PC-9 (cell line): ENCODE measurements at regions of chr7 and their contacts with region 1.

Region 1: GRCh38 chr7:155773531-155773930 is 38.7 kb downstream of the SHH start:
- DNase-seq: no peak
- H3K4me3 ChIP-seq: no peak overlapping the region
- H3K27ac ChIP-seq: no peak overlapping the region
- H3K4me1 ChIP-seq: no peaks in the 10 kb centered on the region
- H3K27me3 ChIP-seq: no peaks in the 10 kb centered on the region
- CTCF ChIP-seq: no peak

Region 2: GRCh38 chr7:155729834-155730233 is 43.7 kb before region 1 on chr7:
- CTCF ChIA-PET with region 1: no interaction called
- POLR2A ChIA-PET with region 1: no interaction called
- intact Hi-C with region 1: no loop called
- DNase-seq: no peak
- H3K4me3 ChIP-seq: no peak overlapping the region
- H3K27ac ChIP-seq: no peak overlapping the region
- H3K4me1 ChIP-seq: peaks cover 13% of the 10 kb centered on the region
- H3K27me3 ChIP-seq: no peaks in the 10 kb centered on the region
- CTCF ChIP-seq: no peak

Region 3: GRCh38 chr7:155762655-155763054 is 10.9 kb before region 1 on chr7:
- CTCF ChIA-PET with region 1: no interaction called
- POLR2A ChIA-PET with region 1: no interaction called
- intact Hi-C with region 1: no loop called
- DNase-seq: no peak
- H3K4me3 ChIP-seq: no peak overlapping the region
- H3K27ac ChIP-seq: no peak overlapping the region
- H3K4me1 ChIP-seq: no peaks in the 10 kb centered on the region
- H3K27me3 ChIP-seq: no peaks in the 10 kb centered on the region
- CTCF ChIP-seq: no peak

Region 4: GRCh38 chr7:155961241-155962190 is 188.0 kb after region 1 on chr7:
- CTCF ChIA-PET with region 1: interaction called, 16 read pairs
- POLR2A ChIA-PET with region 1: no interaction called
- intact Hi-C with region 1: no loop called
- DNase-seq: peak in 1 of 2 experiments; percentile 67
- H3K4me3 ChIP-seq: no peak overlapping the region
- H3K27ac ChIP-seq: peak overlapping the region; percentile 66
- H3K4me1 ChIP-seq: peaks cover 45% of the 10 kb centered on the region
- H3K27me3 ChIP-seq: no peaks in the 10 kb centered on the region
- CTCF ChIP-seq: no peak